ENCODE measurements at regions of chr2 and their contacts with region 1.

Region 1: DNA sequence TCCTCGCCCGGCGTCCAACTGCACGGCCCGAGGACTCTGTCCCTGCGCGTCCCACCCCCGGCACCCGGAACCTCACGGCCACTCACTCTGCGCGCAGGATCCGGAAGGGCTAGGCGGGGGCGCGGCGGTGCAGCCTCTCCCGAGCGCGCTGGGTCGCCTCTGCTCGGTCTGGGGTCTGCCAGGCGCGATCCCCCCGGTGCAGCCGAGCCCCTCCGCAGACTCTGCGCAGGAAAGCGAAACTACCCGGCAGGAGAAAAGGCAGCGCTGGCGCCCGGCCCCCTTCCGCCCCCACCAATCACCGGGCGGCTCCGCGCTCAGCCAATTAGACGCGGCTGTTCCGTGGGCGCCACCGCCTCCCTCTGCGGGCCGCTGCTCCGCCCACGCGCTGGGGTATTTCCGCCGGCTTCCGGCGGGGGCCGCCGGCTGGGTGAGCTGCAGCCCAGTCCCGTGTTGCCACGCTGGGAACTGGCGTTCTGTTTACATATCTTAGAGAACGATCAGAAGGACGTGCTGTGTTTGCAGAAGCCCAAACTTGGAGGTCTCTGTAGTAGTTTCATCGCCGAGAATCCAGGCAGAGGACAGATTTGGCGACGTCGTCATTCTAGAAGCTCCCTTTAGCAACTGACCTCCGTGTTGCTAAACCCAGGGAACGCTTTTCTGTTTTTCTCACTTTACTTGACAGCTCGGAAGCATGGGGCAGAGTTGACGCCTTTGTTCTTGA is at the start of gene STAT1:
- DNase-seq: peak; percentile 98
- ATAC-seq: peak; percentile 91
- H3K4me3 Mint-ChIP-seq: no peak within 1 kb of the TSS
- H3K27ac Mint-ChIP-seq: no peak within 1 kb of the TSS
- H3K4me1 Mint-ChIP-seq: peaks cover 29% of the 10 kb centered on the region
- H3K27me3 Mint-ChIP-seq: no peaks in the 10 kb centered on the region
- CTCF ChIP-seq: no peak
- total RNA-seq, gene STAT1: 71.2 and 85.1 TPM in 2 replicates

Region 2: DNA sequence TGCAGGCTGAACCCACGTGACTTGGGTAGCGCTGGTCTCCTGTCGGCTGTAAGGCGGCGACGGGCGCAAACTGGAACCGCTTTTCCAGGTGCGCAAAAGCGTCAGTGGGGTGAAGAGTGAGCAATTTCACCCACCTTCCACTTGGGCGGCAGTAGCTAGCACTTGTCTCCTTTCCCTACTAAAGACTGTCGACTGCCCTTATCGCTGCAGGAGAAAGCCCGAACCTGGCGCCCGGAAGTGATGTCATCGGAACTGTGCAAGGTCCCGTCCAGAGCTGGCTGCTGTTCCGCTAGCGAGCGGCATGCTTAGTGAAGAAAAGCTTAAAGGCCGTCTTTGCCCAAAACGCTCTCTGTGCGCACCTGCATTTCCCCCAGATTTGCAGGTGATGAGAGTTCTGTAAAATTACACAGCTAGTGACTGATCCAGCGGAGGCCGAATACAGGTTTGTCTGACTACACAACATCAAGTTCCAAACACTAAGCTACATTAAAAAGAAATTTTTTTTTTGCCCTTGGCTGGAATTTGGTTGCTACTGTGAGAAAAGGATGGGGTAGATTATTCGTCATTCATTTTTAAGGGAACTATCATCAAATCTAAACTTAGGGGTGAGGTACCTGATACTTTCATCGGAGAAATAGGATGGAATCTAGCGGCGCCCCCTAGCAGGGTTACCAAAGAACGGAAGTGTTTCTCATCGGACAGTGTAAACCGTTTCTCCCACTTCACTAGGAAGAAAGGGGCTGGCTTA is 1251.4 kb before region 1 on chr2 and contains the start of gene OSGEPL1:
- CTCF ChIA-PET with region 1: no interaction called
- POLR2A ChIA-PET with region 1: no interaction called
- intact Hi-C with region 1: loop called (anchors 2 kb)
- DNase-seq: peak; percentile 81
- ATAC-seq: peak; percentile 93
- H3K4me3 Mint-ChIP-seq: peak within 1 kb of the TSS; percentile 95
- H3K27ac Mint-ChIP-seq: peak within 1 kb of the TSS; percentile 97
- H3K4me1 Mint-ChIP-seq: peaks cover 8% of the 10 kb centered on the region
- H3K27me3 Mint-ChIP-seq: no peaks in the 10 kb centered on the region
- CTCF ChIP-seq: no peak
- total RNA-seq, gene OSGEPL1: 10.6 and 12.3 TPM in 2 replicates

Region 3: GRCh38 chr2:190311893-190312634 is 702.0 kb before region 1 on chr2:
- CTCF ChIA-PET with region 1: no interaction called
- POLR2A ChIA-PET with region 1: no interaction called
- intact Hi-C with region 1: no loop called
- DNase-seq: no peak
- ATAC-seq: no peak
- H3K4me3 Mint-ChIP-seq: no peak overlapping the region
- H3K27ac Mint-ChIP-seq: no peak overlapping the region
- H3K4me1 Mint-ChIP-seq: peaks cover 15% of the 10 kb centered on the region
- H3K27me3 Mint-ChIP-seq: no peaks in the 10 kb centered on the region
- CTCF ChIP-seq: no peak

Region 4: GRCh38 chr2:190343500-190344275 is 670.4 kb before region 1 on chr2 and contains the start of gene INPP1:
- CTCF ChIA-PET with region 1: no interaction called
- POLR2A ChIA-PET with region 1: no interaction called
- intact Hi-C with region 1: loop called (anchors 5 kb)
- DNase-seq: peak; percentile 45
- ATAC-seq: peak; percentile 66
- H3K4me3 Mint-ChIP-seq: peak within 1 kb of the TSS; percentile 87
- H3K27ac Mint-ChIP-seq: peak within 1 kb of the TSS; percentile 47
- H3K4me1 Mint-ChIP-seq: peaks cover 9% of the 10 kb centered on the region
- H3K27me3 Mint-ChIP-seq: no peaks in the 10 kb centered on the region
- CTCF ChIP-seq: no peak
- total RNA-seq, gene INPP1: 4.2 and 4.8 TPM in 2 replicates

Region 5: GRCh38 chr2:190996338-190996946 is 17.6 kb before region 1 on chr2:
- CTCF ChIA-PET with region 1: interaction called, 4 read pairs
- POLR2A ChIA-PET with region 1: no interaction called
- intact Hi-C with region 1: loop called (anchors 1 kb)
- DNase-seq: no peak
- ATAC-seq: peak; percentile 82
- H3K4me3 Mint-ChIP-seq: no peak overlapping the region
- H3K27ac Mint-ChIP-seq: no peak overlapping the region
- H3K4me1 Mint-ChIP-seq: peaks cover 6% of the 10 kb centered on the region
- H3K27me3 Mint-ChIP-seq: no peaks in the 10 kb centered on the region
- CTCF ChIP-seq: peak; percentile 19

Region 6: GRCh38 chr2:191617575-191617974 is 603.5 kb after region 1 on chr2:
- CTCF ChIA-PET with region 1: no interaction called
- POLR2A ChIA-PET with region 1: interaction called, 4 read pairs
- intact Hi-C with region 1: loop called (anchors 5 kb)
- DNase-seq: peak; percentile 19
- ATAC-seq: peak; percentile 90
- H3K4me3 Mint-ChIP-seq: peak overlapping the region; percentile 56
- H3K27ac Mint-ChIP-seq: peak overlapping the region; percentile 86
- H3K4me1 Mint-ChIP-seq: peaks cover 53% of the 10 kb centered on the region
- H3K27me3 Mint-ChIP-seq: no peaks in the 10 kb centered on the region
- CTCF ChIP-seq: no peak

Region 7: DNA sequence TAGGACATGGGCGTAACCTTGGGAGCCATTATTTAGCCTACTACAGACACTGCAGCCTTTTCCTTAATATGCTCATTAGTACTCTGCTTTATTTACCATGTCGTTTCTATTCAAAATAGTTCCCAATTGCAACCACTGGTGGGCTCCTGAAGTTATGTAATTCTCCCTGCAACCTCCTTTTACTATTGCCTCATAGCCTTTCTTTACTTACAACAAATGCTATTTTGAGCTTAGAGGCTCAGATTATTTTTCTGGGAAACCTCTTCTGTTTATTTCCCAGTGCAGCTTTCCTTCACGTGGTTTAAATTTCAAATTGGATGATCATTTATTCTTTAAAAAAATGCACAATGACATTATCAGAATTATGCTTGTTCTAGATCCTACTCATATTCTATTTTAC is 1672.9 kb after region 1 on chr2:
- CTCF ChIA-PET with region 1: no interaction called
- POLR2A ChIA-PET with region 1: no interaction called
- intact Hi-C with region 1: no loop called
- DNase-seq: no peak
- ATAC-seq: no peak
- H3K4me3 Mint-ChIP-seq: no peak overlapping the region
- H3K27ac Mint-ChIP-seq: no peak overlapping the region
- H3K4me1 Mint-ChIP-seq: no peaks in the 10 kb centered on the region
- H3K27me3 Mint-ChIP-seq: no peaks in the 10 kb centered on the region
- CTCF ChIP-seq: no peak